Colonic mucosa (tissue), 4 donors: ENCODE measurements at regions of chr13 and their contacts with region 1.

Region 1: GRCh38 chr13:44484562-44485138 is 91.5 kb downstream of the TSC22D1 start:
- DNase-seq: no peak
- H3K4me3 ChIP-seq: no peak overlapping the region
- H3K27ac ChIP-seq: no peak overlapping the region
- H3K4me1 ChIP-seq: no peaks in the 10 kb centered on the region
- H3K27me3 ChIP-seq: no peaks in the 10 kb centered on the region
- CTCF ChIP-seq: no peak

Region 2: DNA sequence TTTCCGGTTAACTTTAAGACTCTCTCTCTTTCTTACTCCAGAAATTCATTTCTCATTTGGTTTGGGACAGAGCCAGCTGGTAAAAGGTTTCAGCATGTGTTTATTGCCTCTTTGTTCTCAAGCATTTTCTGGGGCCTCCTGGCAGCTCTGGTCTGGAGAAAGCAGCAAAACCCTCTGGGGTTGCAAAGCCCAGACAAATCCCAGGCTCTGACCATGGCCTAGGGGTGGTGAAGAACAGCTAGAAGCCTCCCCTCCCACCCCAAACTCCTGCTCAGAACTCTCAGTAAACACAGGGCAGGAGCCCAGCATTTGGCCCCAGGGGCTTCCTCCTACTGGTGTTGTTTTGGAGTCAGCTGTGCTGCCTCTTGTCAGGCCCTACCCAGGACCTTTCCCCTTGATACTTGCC is 235.2 kb before region 1 on chr13:
- intact Hi-C with region 1: no loop called
- DNase-seq: peak; percentile 36
- H3K4me3 ChIP-seq: no peak overlapping the region
- H3K27ac ChIP-seq: no peak overlapping the region
- H3K4me1 ChIP-seq: no peaks in the 10 kb centered on the region
- H3K27me3 ChIP-seq: no peaks in the 10 kb centered on the region
- CTCF ChIP-seq: no peak

Region 3: DNA sequence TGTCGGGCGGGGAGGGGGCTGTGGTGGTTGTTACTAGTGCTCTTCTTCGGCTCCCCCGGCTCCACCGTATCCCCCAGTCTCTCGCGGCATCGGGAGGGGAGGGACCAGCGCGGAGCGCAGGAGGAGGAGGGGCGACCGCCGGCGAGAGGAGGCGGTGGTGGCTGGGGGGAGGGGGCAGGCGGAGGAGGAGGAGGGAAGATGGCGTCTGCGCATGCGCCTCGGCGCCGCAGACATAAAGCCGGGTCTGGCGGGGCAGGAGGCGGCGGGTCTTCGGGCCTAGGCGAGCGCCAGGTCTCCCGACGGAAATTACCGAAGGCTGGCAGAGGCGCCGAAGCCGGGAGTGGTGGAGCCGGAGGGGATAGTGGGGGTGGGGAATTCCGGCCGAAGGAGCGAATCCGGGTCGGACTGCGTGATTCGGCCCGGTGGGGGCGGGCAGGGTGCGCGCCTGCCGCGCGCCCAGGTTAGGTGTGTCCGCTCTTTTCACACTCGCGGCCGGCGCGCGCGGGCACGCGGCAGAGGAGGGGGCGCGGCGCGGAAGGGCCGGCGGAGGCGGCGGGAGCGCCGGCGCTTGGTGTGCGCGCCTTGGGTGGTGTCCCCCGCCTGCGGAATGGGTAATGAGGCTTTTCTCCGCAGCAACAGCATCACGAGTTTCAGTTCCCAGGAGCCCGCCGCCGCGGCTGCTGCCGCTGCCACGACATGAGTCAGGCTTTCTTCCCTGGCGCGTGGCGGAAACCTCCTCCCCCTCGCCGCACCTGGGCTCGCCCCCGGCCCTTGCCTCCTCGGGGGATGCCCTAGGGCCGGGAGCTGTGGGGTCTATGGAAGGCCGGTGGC is 92.8 kb after region 1 on chr13:
- intact Hi-C with region 1: loop called (anchors 10 kb)
- DNase-seq: peak; percentile 96
- H3K4me3 ChIP-seq: peak overlapping the region; percentile 85
- H3K27ac ChIP-seq: peak overlapping the region; percentile 97
- H3K4me1 ChIP-seq: peaks cover 18% of the 10 kb centered on the region
- H3K27me3 ChIP-seq: no peaks in the 10 kb centered on the region
- CTCF ChIP-seq: no peak

Region 4: GRCh38 chr13:44648392-44649103 is 163.9 kb after region 1 on chr13:
- intact Hi-C with region 1: no loop called
- DNase-seq: no peak
- H3K4me3 ChIP-seq: no peak overlapping the region
- H3K27ac ChIP-seq: no peak overlapping the region
- H3K4me1 ChIP-seq: no peaks in the 10 kb centered on the region
- H3K27me3 ChIP-seq: no peaks in the 10 kb centered on the region
- CTCF ChIP-seq: no peak

Region 5: DNA sequence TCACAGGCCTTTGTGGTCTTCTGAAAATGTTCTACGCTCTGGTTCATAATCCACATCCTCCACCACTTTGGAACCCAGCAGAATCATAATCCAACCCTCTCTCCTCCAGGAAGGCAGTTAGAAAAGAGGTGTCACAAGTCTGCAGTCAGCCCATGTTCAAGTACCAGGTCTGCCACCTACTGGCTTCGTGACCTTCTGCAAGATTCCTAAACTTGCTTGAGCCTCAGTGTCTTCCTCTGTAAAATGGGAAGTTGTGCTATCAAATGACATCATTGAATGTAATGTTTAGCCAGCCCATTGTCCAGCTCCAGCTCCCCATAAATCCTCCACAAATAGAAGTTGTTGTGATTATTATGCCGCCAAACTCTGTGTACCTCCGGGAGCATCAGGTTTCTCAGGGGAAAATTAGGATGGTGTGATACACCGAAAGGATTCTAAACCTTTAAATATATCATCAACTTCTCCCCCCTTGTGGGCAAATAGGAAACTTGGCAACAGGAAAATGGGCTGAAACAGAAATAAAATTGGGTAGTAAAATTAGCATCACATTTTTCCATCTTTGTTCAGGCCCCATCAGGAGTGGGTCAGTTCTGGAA is 394.9 kb after region 1 on chr13:
- intact Hi-C with region 1: loop called (anchors 10 kb)
- DNase-seq: peak; percentile 43
- H3K4me3 ChIP-seq: no peak overlapping the region
- H3K27ac ChIP-seq: no peak overlapping the region
- H3K4me1 ChIP-seq: no peaks in the 10 kb centered on the region
- H3K27me3 ChIP-seq: no peaks in the 10 kb centered on the region
- CTCF ChIP-seq: no peak

Region 6: DNA sequence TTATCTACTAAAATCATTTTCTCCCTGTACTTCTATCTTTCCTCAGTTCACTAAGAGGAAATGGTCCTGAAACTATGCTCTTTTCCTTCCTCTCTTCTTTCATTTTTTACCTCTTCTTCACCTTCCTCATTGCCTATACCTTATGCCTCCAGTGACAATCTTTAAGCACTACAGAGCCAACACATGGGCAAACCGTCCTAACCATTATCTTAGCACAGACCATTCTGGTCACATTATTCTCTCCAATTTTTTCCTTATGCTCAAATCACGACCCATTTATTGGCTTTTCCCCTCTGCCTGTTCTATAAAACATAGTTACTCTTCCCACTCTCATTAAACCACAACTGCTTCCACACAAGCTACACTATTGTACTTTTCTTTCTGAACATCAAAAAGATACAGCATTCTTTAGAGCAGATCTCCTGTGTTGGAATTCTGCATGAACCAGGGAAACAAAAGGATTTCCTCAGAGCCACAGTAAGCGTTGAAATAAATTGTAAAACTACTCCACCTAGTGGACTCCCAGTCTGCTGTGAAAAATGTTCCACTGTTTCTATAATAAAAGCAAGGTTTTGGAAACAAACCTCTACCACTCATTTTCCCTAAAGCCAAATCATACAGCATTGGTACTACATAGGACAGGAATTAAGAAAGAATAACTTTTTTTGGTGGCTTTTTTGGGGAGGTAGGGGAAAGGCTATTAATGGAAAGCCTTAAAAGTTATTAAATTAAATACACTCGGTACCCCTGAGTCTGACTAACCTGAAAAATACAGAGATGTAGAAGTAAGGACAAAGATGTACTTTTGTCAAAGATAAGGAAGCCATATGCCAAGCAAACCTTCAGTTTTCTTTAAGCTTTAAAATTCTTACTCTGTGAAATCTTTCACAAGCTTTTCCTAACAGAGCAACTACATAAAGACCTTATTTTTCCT is 485.2 kb after region 1 on chr13:
- intact Hi-C with region 1: loop called (anchors 2 kb)
- DNase-seq: no peak
- H3K4me3 ChIP-seq: no peak overlapping the region
- H3K27ac ChIP-seq: no peak overlapping the region
- H3K4me1 ChIP-seq: no peaks in the 10 kb centered on the region
- H3K27me3 ChIP-seq: no peaks in the 10 kb centered on the region
- CTCF ChIP-seq: peak; percentile 73